PC-9 (cell line): ENCODE measurements at regions of chr2 and their contacts with region 1.

Region 1: DNA sequence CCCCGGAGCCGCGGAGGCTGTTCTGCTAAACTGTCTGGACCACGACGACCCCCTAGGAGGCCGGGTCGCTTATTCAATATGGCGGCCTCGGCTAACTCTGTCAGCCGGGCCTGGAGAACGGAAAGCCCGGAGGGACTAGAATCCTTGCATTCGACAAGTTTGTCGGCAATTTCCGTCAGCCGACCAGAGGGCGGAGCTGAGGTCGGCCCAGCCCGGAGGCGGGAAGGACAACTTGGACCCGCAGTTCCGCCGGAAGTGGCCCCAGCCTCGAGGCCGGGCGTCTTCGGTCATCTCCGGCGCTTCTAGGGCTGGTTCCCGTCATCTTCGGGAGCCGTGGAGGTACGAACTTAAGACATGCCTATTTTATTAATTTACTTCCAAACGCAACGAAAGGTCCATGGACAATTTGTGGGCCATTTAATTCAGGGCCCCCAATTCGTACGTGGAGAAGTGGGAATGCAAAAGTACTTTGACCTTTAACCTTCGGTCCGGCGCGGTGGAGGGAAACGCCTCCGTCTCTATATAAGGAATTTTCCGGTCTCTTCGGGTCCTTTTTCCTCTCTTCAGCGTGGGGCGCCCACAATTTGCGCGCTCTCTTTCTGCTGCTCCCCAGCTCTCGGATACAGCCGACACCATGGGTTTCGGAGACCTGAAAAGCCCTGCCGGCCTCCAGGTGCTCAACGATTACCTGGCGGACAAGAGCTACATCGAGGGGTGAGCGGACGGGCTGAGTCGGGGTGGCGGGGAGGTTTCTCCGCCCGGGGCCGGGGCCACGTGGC is at the starts of genes EEF1B2 and NDUFS1:
- DNase-seq: peak; percentile 89 to 91
- H3K4me3 ChIP-seq: peak within 1 kb of the TSS; percentile 94
- H3K27ac ChIP-seq: peak within 1 kb of the TSS; percentile 81
- H3K4me1 ChIP-seq: peaks cover 16% of the 10 kb centered on the region
- H3K27me3 ChIP-seq: no peaks in the 10 kb centered on the region
- CTCF ChIP-seq: no peak
- total RNA-seq, gene EEF1B2: 328 and 367 TPM in 2 replicates
- total RNA-seq, gene NDUFS1: 60.7 and 68.9 TPM in 2 replicates

Region 2: DNA sequence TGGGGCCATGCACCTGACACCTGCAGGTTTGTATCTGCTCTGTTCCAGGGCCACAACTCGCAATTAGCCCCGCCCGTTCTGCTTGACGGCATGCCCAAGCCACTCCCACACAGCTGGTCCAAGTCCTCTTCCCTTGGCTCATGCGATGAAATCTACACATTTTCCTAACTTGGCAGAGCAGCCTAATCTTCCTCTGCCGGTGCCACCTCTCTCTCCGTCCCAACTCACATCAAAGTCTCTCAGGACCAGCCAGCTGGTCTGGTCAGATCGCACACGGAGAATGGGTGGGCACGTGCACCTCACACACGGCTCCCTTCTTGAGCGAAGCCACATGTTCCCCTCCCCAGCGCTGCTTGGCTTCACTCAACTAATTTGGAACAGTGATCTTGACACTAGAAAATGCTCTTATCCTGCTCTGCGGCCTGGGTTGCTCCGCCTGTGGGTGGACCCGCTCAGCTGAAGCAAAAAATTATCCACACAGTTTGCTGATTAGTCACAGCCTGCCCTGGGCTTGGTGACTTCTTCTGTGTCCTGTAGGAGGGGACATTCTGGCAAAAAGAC is 300.6 kb before region 1 on chr2:
- CTCF ChIA-PET with region 1: no interaction called
- POLR2A ChIA-PET with region 1: no interaction called
- intact Hi-C with region 1: no loop called
- DNase-seq: peak in 1 of 2 experiments; percentile 19
- H3K4me3 ChIP-seq: no peak overlapping the region
- H3K27ac ChIP-seq: no peak overlapping the region
- H3K4me1 ChIP-seq: no peaks in the 10 kb centered on the region
- H3K27me3 ChIP-seq: no peaks in the 10 kb centered on the region
- CTCF ChIP-seq: no peak

Region 3: DNA sequence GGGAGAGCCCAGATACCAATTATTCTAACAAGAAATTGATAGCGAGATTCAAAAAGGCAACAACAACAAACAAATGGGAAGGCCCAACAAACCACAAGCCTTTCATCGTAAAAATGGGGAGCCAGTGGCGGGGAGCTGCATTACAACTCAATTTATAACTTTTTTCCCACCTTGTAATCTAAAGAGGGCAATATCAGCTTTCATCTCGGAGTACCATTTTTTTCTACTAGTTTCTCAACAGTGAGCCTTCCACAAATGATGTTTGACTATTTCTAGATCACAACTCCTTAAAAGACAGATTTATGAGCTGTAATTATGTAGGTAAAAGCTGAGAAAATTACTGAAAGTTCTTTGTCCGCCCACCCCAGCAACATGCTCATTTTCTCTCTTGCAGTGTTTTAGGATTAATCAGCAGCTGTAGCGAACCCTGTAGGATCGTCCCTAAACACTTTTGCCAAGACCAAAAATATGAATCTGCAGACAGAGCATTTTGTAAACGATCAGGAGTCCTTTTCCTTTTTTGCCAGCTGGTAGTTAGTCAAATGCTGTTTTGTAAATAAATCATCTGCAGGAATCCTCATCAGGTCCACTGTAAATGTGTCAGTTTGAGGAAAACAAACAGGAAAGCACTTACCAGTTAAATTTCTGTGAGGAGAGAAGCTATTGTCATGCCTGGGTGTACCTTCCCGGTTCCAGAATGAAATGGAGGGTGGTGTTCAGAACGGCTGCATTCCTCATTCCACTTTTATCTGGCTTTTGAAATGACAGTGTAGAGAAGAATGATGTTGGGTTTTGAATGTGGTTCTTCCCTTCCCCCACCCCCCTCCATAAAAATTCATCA is 53.4 kb after region 1 on chr2:
- CTCF ChIA-PET with region 1: no interaction called
- POLR2A ChIA-PET with region 1: no interaction called
- intact Hi-C with region 1: loop called (anchors 5 kb)
- DNase-seq: peak; percentile 17 to 55
- H3K4me3 ChIP-seq: peak overlapping the region; percentile 51; the same call in 1 of the 2 replicates
- H3K27ac ChIP-seq: peak overlapping the region; percentile 82
- H3K4me1 ChIP-seq: peaks cover 35% of the 10 kb centered on the region
- H3K27me3 ChIP-seq: no peaks in the 10 kb centered on the region
- CTCF ChIP-seq: no peak

Region 4: GRCh38 chr2:206241736-206242135 is 82.2 kb after region 1 on chr2:
- CTCF ChIA-PET with region 1: no interaction called
- POLR2A ChIA-PET with region 1: no interaction called
- intact Hi-C with region 1: no loop called
- DNase-seq: no peak
- H3K4me3 ChIP-seq: no peak overlapping the region
- H3K27ac ChIP-seq: no peak overlapping the region
- H3K4me1 ChIP-seq: no peaks in the 10 kb centered on the region
- H3K27me3 ChIP-seq: no peaks in the 10 kb centered on the region
- CTCF ChIP-seq: no peak

Region 5: GRCh38 chr2:206260188-206261012 is 100.9 kb after region 1 on chr2:
- CTCF ChIA-PET with region 1: interaction called, 6 read pairs
- POLR2A ChIA-PET with region 1: no interaction called
- intact Hi-C with region 1: loop called (anchors 1 kb)
- DNase-seq: no peak
- H3K4me3 ChIP-seq: no peak overlapping the region
- H3K27ac ChIP-seq: no peak overlapping the region
- H3K4me1 ChIP-seq: no peaks in the 10 kb centered on the region
- H3K27me3 ChIP-seq: no peaks in the 10 kb centered on the region
- CTCF ChIP-seq: peak; percentile 67

Region 6: DNA sequence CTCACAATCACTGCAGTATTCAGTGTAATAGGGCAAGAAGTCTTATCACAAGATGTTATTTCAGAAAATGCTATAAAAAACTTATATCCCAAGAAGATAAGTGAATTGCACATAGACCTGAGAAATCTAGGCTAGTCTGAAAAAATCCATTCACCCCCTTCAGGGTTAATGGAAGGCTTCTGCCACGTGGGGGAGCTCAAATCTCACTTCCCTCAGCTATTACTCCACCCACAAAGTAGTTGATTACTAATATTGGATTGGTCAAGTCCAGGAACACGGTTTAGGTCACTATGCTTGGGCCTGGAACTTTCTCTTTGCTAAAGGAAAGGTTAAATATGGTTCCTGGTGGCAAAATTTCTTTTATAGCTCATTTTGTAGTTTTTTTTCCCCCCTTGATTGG is 232.6 kb after region 1 on chr2:
- CTCF ChIA-PET with region 1: no interaction called
- POLR2A ChIA-PET with region 1: no interaction called
- intact Hi-C with region 1: loop called (anchors 1 kb)
- DNase-seq: peak; percentile 24 to 49
- H3K4me3 ChIP-seq: no peak overlapping the region
- H3K27ac ChIP-seq: no peak overlapping the region
- H3K4me1 ChIP-seq: no peaks in the 10 kb centered on the region
- H3K27me3 ChIP-seq: no peaks in the 10 kb centered on the region
- CTCF ChIP-seq: peak; percentile 65

Region 7: GRCh38 chr2:206765242-206766056 is 605.9 kb after region 1 on chr2 and contains the starts of genes FASTKD2 and MDH1B:
- CTCF ChIA-PET with region 1: no interaction called
- POLR2A ChIA-PET with region 1: no interaction called
- intact Hi-C with region 1: loop called (anchors 10 kb)
- DNase-seq: peak; percentile 73 to 79
- H3K4me3 ChIP-seq: peak within 1 kb of the TSS; percentile 82
- H3K27ac ChIP-seq: peak within 1 kb of the TSS; percentile 74
- H3K4me1 ChIP-seq: peaks cover 16% of the 10 kb centered on the region
- H3K27me3 ChIP-seq: no peaks in the 10 kb centered on the region
- CTCF ChIP-seq: no peak
- total RNA-seq, gene FASTKD2: 12.0 and 12.1 TPM in 2 replicates
- total RNA-seq, gene MDH1B: 2.7 and 4.1 TPM in 2 replicates